Cardiac septum (tissue), 1 donor: ENCODE measurements at regions of chr18 and their contacts with region 1.

Region 1: DNA sequence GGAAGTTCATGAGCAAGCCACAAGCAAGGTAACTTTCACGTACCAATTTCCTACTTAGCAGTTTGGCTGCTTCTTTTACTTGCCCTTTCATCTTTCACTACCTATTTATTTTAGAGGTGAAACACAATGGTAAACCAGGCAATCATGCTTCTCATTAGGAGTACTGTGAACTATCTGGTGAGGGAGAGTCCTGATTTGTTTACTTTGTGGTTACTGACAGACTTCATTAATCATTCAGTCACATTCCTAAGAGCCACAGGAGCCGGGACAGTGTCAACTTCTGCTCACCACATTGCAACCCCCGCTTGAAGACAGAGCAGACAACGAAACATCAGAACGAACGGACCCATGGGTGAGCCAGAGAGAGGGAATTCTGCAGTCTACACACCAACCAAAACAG is 28.8 kb downstream of the TUBB6 start:
- DNase-seq: no peak

Region 2: GRCh38 chr18:12307701-12308385 is 29.0 kb before region 1 on chr18 and contains the start of gene TUBB6:
- intact Hi-C with region 1: no loop called
- DNase-seq: peak; percentile 85
- total RNA-seq, gene TUBB6: 155 TPM

Region 3: GRCh38 chr18:12361770-12362378 is 25.0 kb after region 1 on chr18:
- intact Hi-C with region 1: loop called (anchors 1 kb)
- DNase-seq: no peak